Colonic mucosa (tissue), 4 donors: ENCODE measurements at regions of chr18 and their contacts with region 1.

Region 1: GRCh38 chr18:63518178-63519012 is 23.8 kb upstream of the SERPINB12 start:
- DNase-seq: peak; percentile 66
- H3K4me3 ChIP-seq: no peak overlapping the region
- H3K27ac ChIP-seq: no peak overlapping the region
- H3K4me1 ChIP-seq: no peaks in the 10 kb centered on the region
- H3K27me3 ChIP-seq: no peaks in the 10 kb centered on the region
- CTCF ChIP-seq: peak; percentile 57

Region 2: DNA sequence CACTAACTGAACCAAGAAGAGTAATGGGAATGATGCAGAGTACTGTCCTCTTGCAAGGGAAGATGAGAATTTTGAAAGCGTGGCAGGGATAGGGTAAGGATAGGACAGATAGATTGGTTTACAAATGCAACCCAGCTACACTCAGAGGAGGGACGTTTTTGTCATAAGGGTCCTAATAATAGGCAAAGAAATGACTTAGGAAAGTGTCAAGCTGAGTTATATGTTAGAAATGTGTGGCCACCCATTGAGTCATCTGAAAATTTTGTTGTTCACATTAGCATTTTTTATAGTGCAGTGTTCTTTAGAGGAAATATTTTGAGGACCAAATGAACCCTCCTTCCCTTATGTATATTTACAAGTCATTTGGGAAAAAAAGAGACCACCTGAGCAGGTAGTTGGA is 665.5 kb before region 1 on chr18:
- intact Hi-C with region 1: no loop called
- DNase-seq: no peak
- H3K4me3 ChIP-seq: no peak overlapping the region
- H3K27ac ChIP-seq: no peak overlapping the region
- H3K4me1 ChIP-seq: no peaks in the 10 kb centered on the region
- H3K27me3 ChIP-seq: no peaks in the 10 kb centered on the region
- CTCF ChIP-seq: no peak

Region 3: GRCh38 chr18:63578357-63578958 is 60.1 kb after region 1 on chr18:
- intact Hi-C with region 1: loop called (anchors 5 kb)
- DNase-seq: peak; percentile 28
- H3K4me3 ChIP-seq: no peak overlapping the region
- H3K27ac ChIP-seq: no peak overlapping the region
- H3K4me1 ChIP-seq: no peaks in the 10 kb centered on the region
- H3K27me3 ChIP-seq: no peaks in the 10 kb centered on the region
- CTCF ChIP-seq: peak; percentile 60

Region 4: DNA sequence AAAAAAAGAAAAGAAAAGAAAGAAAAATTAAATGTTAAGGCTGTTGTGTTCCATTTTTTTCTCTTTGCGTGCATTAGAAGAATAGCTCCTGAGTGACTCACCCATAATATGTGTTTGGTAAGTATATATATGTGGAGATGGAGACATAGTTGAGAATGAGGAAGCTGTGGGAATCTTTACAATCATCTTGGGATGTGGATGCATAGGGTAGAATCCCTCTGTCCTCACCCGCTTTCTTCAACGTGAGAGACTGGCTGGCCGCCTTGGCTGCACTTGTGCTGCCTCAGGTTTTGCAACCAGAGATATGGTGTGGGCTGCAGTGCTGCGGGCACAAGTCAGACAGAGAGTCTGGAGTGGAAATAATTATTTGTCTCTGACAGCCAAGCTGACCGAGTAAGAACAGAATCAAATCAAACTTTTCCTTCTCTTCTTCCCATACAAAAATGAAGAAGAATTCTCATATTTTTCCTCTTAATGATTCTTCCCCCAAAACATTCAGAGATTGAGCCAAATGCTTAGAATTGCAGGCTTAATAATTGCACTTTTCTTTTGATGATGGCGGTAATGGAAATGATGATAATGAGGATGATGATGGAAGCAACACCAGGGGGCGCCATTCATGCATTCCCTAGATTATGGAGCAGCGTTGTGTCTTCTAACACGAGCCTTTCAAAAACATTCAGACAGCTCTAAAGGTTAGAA is 305.3 kb after region 1 on chr18:
- intact Hi-C with region 1: no loop called
- DNase-seq: peak; percentile 31
- H3K4me3 ChIP-seq: no peak overlapping the region
- H3K27ac ChIP-seq: no peak overlapping the region
- H3K4me1 ChIP-seq: no peaks in the 10 kb centered on the region
- H3K27me3 ChIP-seq: no peaks in the 10 kb centered on the region
- CTCF ChIP-seq: peak; percentile 41

Region 5: DNA sequence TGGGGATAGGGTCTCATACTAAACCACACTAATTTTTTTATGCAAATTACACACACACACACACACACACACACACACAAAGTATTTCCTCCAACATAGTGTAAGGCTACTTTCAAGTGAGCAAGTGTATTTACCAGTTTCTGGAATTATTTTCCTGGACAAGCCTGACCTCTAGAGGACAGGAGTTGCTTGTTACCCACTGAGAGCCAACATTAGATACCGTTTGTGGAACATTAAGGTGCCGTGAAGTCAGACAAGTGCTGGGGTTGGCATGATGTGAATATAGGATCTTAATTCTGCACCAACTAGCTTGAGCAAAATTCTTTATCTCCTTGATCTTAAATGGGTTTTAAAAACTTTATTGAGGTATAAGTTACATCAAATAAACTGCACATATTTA is 329.8 kb after region 1 on chr18:
- intact Hi-C with region 1: loop called (anchors 5 kb)
- DNase-seq: no peak
- H3K4me3 ChIP-seq: no peak overlapping the region
- H3K27ac ChIP-seq: no peak overlapping the region
- H3K4me1 ChIP-seq: no peaks in the 10 kb centered on the region
- H3K27me3 ChIP-seq: no peaks in the 10 kb centered on the region
- CTCF ChIP-seq: peak; percentile 22

Region 6: DNA sequence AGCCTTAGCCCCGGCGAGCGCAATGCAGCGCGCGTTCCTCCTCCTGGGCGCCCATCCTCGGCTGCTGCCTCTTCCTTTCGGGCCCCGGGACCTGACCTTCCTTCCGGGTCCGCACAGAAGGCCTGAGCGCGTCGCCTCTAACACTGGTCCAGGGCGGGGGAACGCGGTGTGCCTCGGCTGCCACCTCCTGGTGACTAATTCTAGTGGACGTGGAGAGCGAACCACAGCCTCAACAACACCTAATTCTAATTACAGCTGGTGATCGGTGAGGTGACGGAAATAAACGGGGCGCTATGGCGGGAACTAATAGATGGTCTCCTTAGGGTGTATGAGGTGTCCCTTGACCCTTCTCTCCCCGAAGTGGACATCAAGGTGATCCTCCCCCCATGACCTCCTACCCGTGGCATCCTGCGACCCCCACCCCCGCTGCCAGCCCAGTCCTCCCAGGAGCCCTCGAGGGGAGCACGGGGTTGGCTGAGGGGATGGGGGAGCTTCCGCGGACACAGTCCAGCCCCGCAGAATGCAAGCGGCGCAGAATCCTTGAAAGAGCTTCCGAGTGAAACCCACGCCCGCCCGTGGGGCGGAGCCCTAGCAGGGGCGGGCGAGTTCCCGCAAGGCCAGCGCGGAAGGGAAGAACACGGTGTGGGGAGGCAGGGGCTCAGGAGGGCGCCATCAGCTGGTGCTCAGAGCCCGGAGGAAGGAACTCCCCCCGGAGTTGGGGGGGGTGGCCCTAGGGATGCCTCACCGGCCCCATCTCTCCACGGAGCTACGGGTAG is 417.9 kb after region 1 on chr18:
- intact Hi-C with region 1: loop called (anchors 10 kb)
- DNase-seq: peak; percentile 78
- H3K4me3 ChIP-seq: peak overlapping the region; percentile 43
- H3K27ac ChIP-seq: no peak overlapping the region
- H3K4me1 ChIP-seq: peaks cover 5% of the 10 kb centered on the region
- H3K27me3 ChIP-seq: no peaks in the 10 kb centered on the region
- CTCF ChIP-seq: peak; percentile 65

Region 7: GRCh38 chr18:63994783-63995399 is 476.5 kb after region 1 on chr18:
- intact Hi-C with region 1: loop called (anchors 10 kb)
- DNase-seq: peak; percentile 31
- H3K4me3 ChIP-seq: no peak overlapping the region
- H3K27ac ChIP-seq: no peak overlapping the region
- H3K4me1 ChIP-seq: no peaks in the 10 kb centered on the region
- H3K27me3 ChIP-seq: no peaks in the 10 kb centered on the region
- CTCF ChIP-seq: peak; percentile 82